Naive thymus-derived CD4-positive, alpha-beta T cell (primary cell): ENCODE measurements at regions of chr13 and their contacts with region 1.

Region 1: DNA sequence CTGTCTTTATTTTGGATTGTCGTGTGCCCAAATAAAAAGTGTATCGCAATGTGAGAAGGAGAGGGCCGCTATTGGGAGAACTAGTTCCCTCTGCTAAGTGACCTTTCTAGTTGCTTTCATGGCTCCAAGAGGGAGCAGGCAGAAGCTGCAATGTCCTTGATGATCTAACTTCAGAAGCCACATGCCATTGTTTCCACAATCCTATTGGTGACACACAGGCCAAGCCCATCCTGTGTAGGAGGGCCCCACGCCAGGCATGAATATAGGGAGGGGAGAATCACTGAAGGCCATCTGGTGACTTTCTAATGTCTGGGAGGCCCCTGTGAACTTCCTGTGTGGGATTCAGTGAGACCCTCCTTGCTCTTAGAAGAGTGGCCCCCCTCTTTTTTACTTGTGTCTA is 47.8 kb upstream of the KPNA3 start:
- DNase-seq: no peak
- ATAC-seq: no peak
- H3K4me3 ChIP-seq: no peak overlapping the region
- H3K4me3 Mint-ChIP-seq: no peak overlapping the region
- H3K27ac ChIP-seq: no peak overlapping the region
- H3K27ac Mint-ChIP-seq: no peak overlapping the region
- H3K4me1 ChIP-seq: no peaks in the 10 kb centered on the region
- H3K4me1 Mint-ChIP-seq: no peaks in the 10 kb centered on the region
- H3K27me3 ChIP-seq: no peaks in the 10 kb centered on the region
- H3K27me3 Mint-ChIP-seq: no peaks in the 10 kb centered on the region

Region 2: DNA sequence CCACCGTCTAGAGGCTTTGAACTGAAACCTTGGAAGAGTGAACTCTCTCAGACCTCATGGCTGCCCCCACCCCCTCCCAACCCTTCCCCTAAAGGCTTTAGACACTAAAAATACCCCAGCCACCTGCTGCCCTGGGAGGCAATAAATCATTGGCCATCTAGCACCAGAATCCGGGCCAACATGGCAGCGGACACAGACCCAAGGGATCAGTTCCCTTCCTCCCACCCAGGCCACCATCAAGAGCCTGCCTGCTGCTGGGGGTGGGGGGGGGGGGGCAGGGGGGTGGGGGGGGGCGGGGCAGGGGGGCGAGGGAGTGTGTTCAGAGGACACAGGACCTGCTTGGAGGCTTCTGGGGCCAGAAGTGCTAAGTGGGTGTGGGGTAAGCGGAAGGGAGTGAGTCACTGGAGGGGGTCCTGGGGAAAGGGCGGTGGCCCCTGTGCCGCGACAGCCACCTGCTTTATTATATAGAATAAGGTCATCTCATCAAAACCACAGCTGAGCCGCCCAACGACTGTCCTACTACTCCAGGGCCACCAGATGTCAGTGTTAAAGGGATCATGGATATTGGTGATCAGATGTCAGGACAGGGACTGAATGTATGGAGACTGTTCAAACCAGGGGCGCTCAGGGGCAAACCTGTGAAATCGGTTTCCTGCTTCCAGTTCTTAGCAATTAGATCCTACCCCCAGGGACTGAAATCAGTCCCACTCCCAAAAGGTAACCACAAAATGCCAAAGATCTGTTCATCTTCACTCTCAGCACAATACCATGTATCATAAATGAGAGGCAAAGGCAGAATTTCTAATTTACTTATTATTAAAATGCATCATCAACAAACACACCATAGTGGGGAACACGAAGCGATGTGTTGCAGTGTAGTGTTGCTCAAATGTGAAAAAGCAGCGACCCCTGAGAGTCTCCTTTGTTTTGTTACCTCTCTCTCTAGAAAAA is 187.6 kb before region 1 on chr13:
- CTCF ChIA-PET with region 1: no interaction called
- POLR2A ChIA-PET with region 1: no interaction called
- intact Hi-C with region 1: loop called in 1 of 2 experiments (anchors 5 kb)
- DNase-seq: no peak
- ATAC-seq: peak; percentile 60
- H3K4me3 ChIP-seq: no peak overlapping the region
- H3K4me3 Mint-ChIP-seq: no peak overlapping the region
- H3K27ac ChIP-seq: no peak overlapping the region
- H3K27ac Mint-ChIP-seq: no peak overlapping the region
- H3K4me1 ChIP-seq: no peaks in the 10 kb centered on the region
- H3K4me1 Mint-ChIP-seq: peaks cover 0 to 7% (median 0%) of the 10 kb centered on the region in 7 donors
- H3K27me3 ChIP-seq: no peaks in the 10 kb centered on the region
- H3K27me3 Mint-ChIP-seq: no peaks in the 10 kb centered on the region